MCF 10A (cell line): ENCODE measurements at regions of chr3 and their contacts with region 1.

Region 1: GRCh38 chr3:173733029-173733652 is 335.6 kb downstream of the NLGN1 start:
- DNase-seq: peak; percentile 52
- H3K4me3 Mint-ChIP-seq: no peak overlapping the region
- H3K27ac Mint-ChIP-seq: no peak overlapping the region
- H3K4me1 Mint-ChIP-seq: peaks cover 6% of the 10 kb centered on the region
- H3K27me3 Mint-ChIP-seq: peaks cover 5% of the 10 kb centered on the region
- CTCF ChIP-seq: peak; percentile 41

Region 2: DNA sequence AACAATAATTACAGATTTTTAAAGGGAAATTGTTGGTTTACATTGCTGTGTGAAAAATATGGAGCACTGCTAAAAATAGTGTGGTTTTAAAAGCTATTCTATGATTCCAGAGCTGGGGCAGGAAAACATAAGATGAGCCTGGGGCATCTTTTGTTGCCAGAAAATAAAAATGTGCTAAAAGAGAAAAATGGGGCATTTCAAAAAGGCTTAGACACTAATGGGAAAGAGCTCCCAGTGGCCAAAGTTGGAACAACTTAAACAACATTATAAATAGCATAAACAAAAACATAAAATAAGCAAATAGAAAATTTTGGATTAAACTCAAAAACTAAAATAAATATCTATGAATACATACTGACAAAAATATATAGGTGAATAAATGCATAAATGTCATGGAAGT is 143.3 kb after region 1 on chr3:
- CTCF ChIA-PET with region 1: interaction called, 9 read pairs
- POLR2A ChIA-PET with region 1: no interaction called
- intact Hi-C with region 1: loop called (anchors 10 kb)
- DNase-seq: peak; percentile 6
- H3K4me3 Mint-ChIP-seq: no peak overlapping the region
- H3K27ac Mint-ChIP-seq: no peak overlapping the region
- H3K4me1 Mint-ChIP-seq: no peaks in the 10 kb centered on the region
- H3K27me3 Mint-ChIP-seq: no peaks in the 10 kb centered on the region
- CTCF ChIP-seq: no peak